ENCODE measurements at regions of chr1 and their contacts with region 1.

Region 1: GRCh38 chr1:156129706-156130581 is 15.4 kb downstream of the LMNA start:
- DNase-seq: peak; percentile 60 to 87 (median 78)
- ATAC-seq: peak; percentile 29
- H3K4me3 ChIP-seq: no peak overlapping the region
- H3K4me3 Mint-ChIP-seq: no peak overlapping the region
- H3K27ac ChIP-seq: no peak overlapping the region
- H3K27ac Mint-ChIP-seq: peak overlapping the region; percentile 55
- H3K4me1 ChIP-seq: peaks cover 46% of the 10 kb centered on the region
- H3K4me1 Mint-ChIP-seq: peaks cover 37% of the 10 kb centered on the region
- H3K27me3 ChIP-seq: no peaks in the 10 kb centered on the region
- H3K27me3 Mint-ChIP-seq: peaks cover 2% of the 10 kb centered on the region
- CTCF ChIP-seq: peak; percentile 85

Region 2: GRCh38 chr1:155657463-155657862 is 472.5 kb before region 1 on chr1:
- CTCF ChIA-PET with region 1: no interaction called
- POLR2A ChIA-PET with region 1: no interaction called
- intact Hi-C with region 1: no loop called
- DNase-seq: no peak
- ATAC-seq: no peak
- H3K4me3 ChIP-seq: no peak overlapping the region
- H3K4me3 Mint-ChIP-seq: no peak overlapping the region
- H3K27ac ChIP-seq: no peak overlapping the region
- H3K27ac Mint-ChIP-seq: peak overlapping the region; percentile 35
- H3K4me1 ChIP-seq: no peaks in the 10 kb centered on the region
- H3K4me1 Mint-ChIP-seq: no peaks in the 10 kb centered on the region
- H3K27me3 ChIP-seq: no peaks in the 10 kb centered on the region
- H3K27me3 Mint-ChIP-seq: no peaks in the 10 kb centered on the region
- CTCF ChIP-seq: no peak

Region 3: GRCh38 chr1:156090822-156091188 is 39.1 kb before region 1 on chr1:
- CTCF ChIA-PET with region 1: interaction called, 1,057 read pairs
- POLR2A ChIA-PET with region 1: interaction called, 12 read pairs
- intact Hi-C with region 1: loop called (anchors 1 kb)
- DNase-seq: peak; percentile 79 to 95 (median 89)
- ATAC-seq: peak; percentile 98
- H3K4me3 ChIP-seq: no peak overlapping the region
- H3K4me3 Mint-ChIP-seq: no peak overlapping the region
- H3K27ac ChIP-seq: no peak overlapping the region
- H3K27ac Mint-ChIP-seq: no peak overlapping the region
- H3K4me1 ChIP-seq: peaks cover 10% of the 10 kb centered on the region
- H3K4me1 Mint-ChIP-seq: peaks cover 3% of the 10 kb centered on the region
- H3K27me3 ChIP-seq: peaks cover 0 to 3% of the 10 kb centered on the region in 2 experiments
- H3K27me3 Mint-ChIP-seq: peaks cover 18% of the 10 kb centered on the region
- CTCF ChIP-seq: peak; percentile 76

Region 4: DNA sequence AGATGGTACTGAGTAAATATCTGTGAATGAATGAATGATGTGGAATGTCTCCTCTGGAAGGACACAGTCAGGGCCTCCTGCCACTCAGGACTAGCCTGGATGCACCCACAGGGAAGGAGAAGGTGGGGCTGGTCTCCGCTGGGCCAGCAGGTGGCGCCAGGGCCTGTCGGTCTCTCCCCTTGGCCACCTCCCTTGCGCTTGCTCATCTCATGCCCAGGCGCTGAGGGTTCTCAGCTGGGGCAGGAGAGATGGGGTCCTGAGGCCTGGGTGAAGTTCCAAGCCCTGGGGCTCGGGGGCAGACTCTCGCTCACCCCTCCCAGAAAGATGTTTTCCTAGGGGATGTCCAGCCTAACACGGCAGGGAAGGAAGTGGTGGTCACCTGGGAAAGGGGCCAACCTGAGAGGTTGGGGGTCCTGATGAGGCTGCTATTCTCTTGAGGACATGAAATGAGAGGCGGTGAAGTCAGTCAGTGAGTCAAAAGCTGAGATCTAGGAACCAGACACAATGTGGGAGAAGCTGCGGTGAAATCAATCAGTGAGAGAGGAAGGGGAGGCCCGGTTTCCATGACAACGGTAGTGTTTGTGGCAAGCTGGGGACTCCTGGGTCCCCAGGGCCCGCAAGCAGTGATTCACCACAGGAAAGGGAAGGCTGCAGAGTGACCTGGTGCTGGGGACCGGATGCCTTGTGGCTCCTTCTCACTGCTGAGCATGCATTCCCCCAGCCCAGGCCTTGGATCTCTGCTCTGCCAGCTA is 33.1 kb before region 1 on chr1:
- CTCF ChIA-PET with region 1: interaction called, 1,057 read pairs
- POLR2A ChIA-PET with region 1: interaction called, 12 read pairs
- intact Hi-C with region 1: loop called (anchors 1 kb)
- DNase-seq: peak; percentile 72 to 97 (median 87)
- ATAC-seq: peak; percentile 82
- H3K4me3 ChIP-seq: peak overlapping the region in 1 of 2 experiments; percentile 7
- H3K4me3 Mint-ChIP-seq: peak overlapping the region; percentile 46
- H3K27ac ChIP-seq: peak overlapping the region; percentile 48 to 87
- H3K27ac Mint-ChIP-seq: peak overlapping the region; percentile 89
- H3K4me1 ChIP-seq: peaks cover 22% of the 10 kb centered on the region
- H3K4me1 Mint-ChIP-seq: peaks cover 26% of the 10 kb centered on the region
- H3K27me3 ChIP-seq: no peaks in the 10 kb centered on the region
- H3K27me3 Mint-ChIP-seq: peaks cover 2% of the 10 kb centered on the region
- CTCF ChIP-seq: peak; percentile 93

Region 5: DNA sequence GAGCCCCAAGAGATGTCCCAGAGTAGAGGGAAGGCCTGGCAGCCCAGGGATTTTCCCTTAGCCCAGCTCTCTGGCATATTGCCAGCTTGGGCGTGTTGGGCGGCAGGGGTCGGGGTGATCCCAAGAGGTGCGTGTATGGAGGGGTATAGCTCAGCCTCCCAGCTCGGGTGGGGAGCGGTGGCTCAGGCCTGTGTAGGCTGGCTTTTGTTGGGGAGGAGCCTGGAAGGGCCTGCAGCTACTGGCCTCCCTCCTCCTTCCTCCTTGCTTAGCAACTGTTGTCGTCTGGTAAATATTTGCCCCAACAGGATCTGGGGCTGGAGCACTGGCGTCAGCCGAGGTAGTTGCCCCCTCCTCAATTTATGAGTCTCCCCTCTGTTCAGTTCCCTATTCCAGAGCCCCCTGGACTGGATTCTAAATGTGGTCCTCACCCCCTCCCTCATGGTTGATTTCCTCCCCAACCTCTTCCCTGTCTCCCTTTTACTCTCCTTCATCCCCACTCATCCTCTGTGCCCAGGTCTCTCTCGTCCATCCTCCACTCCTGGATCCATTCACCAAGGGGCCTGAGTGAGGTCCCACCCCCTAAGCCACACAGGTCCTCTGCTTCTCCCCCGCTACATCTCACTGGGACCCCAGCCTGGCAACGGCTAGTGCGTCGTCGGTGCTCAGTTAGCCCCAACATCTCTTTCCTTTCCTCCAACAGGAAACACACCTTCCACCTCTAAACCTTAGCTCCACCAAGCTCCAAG is 25.7 kb before region 1 on chr1:
- CTCF ChIA-PET with region 1: interaction called, 1,057 read pairs
- POLR2A ChIA-PET with region 1: interaction called, 6 read pairs
- intact Hi-C with region 1: loop called (anchors 1 kb)
- DNase-seq: peak in 5 of 9 experiments; percentile 50 to 82 (median 61)
- ATAC-seq: no peak
- H3K4me3 ChIP-seq: no peak overlapping the region
- H3K4me3 Mint-ChIP-seq: peak overlapping the region; percentile 29
- H3K27ac ChIP-seq: no peak overlapping the region
- H3K27ac Mint-ChIP-seq: peak overlapping the region; percentile 52
- H3K4me1 ChIP-seq: peaks cover 28% of the 10 kb centered on the region
- H3K4me1 Mint-ChIP-seq: peaks cover 33% of the 10 kb centered on the region
- H3K27me3 ChIP-seq: no peaks in the 10 kb centered on the region
- H3K27me3 Mint-ChIP-seq: no peaks in the 10 kb centered on the region
- CTCF ChIP-seq: no peak

Region 6: GRCh38 chr1:156114101-156114916 is 15.6 kb before region 1 on chr1 and contains the start of gene LMNA:
- CTCF ChIA-PET with region 1: interaction called, 1,057 read pairs
- POLR2A ChIA-PET with region 1: interaction called, 4 read pairs
- intact Hi-C with region 1: loop called (anchors 1 kb)
- DNase-seq: peak; percentile 40 to 90 (median 77)
- ATAC-seq: peak; percentile 80
- H3K4me3 ChIP-seq: peak within 1 kb of the TSS; percentile 60 to 83
- H3K4me3 Mint-ChIP-seq: peak within 1 kb of the TSS; percentile 93
- H3K27ac ChIP-seq: peak within 1 kb of the TSS; percentile 7 to 68
- H3K27ac Mint-ChIP-seq: peak within 1 kb of the TSS; percentile 88
- H3K4me1 ChIP-seq: peaks cover 22% of the 10 kb centered on the region
- H3K4me1 Mint-ChIP-seq: peaks cover 26% of the 10 kb centered on the region
- H3K27me3 ChIP-seq: peaks cover 16 to 18% of the 10 kb centered on the region in 2 experiments
- H3K27me3 Mint-ChIP-seq: peaks cover 26% of the 10 kb centered on the region
- CTCF ChIP-seq: no peak
- total RNA-seq, gene LMNA: 281 to 298 TPM

Region 7: DNA sequence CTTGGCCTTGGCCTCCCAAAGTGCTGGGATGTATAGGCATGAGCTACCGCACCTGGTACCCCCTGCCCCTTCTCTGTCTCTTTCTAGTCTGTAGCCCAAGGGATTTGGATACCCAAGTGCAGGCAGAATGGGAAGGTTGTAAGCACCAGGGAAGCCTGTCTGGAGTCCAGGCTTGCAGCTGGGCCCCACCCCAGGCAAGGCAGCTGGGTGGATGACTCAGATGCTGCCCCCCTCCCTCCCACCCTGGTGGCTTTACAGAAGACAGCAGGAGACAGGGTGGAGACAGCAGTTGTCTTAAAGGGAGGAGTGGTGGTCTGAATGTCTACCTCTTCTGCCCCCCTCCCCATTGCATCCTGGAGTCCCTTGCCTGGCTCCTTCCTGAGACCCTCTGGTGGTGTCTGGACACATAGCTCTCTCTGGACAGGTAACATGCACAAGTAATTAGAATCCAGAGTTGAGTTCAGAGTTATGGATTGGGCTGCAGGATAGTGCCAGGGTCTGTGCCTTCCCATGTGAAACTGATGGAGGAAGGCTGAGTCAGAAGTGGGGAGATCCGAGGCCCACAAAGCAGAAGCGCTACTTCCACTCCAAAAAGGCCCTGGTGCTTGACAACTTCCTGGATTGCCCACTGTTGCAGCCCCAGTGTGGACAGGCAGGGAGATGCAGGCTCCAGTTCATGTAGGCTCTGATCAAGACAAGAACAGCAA is 10.3 kb before region 1 on chr1:
- CTCF ChIA-PET with region 1: interaction called, 49 read pairs
- POLR2A ChIA-PET with region 1: no interaction called
- intact Hi-C with region 1: loop called (anchors 1 kb)
- DNase-seq: peak in 2 of 9 experiments; percentile 45 to 59
- ATAC-seq: peak; percentile 27
- H3K4me3 ChIP-seq: no peak overlapping the region
- H3K4me3 Mint-ChIP-seq: no peak overlapping the region
- H3K27ac ChIP-seq: no peak overlapping the region
- H3K27ac Mint-ChIP-seq: no peak overlapping the region
- H3K4me1 ChIP-seq: peaks cover 20% of the 10 kb centered on the region
- H3K4me1 Mint-ChIP-seq: peaks cover 30% of the 10 kb centered on the region
- H3K27me3 ChIP-seq: peaks cover 11 to 13% of the 10 kb centered on the region in 2 experiments
- H3K27me3 Mint-ChIP-seq: peaks cover 16% of the 10 kb centered on the region
- CTCF ChIP-seq: no peak

Region 8: GRCh38 chr1:156146020-156146768 is 16.2 kb after region 1 on chr1:
- CTCF ChIA-PET with region 1: interaction called, 102 read pairs
- POLR2A ChIA-PET with region 1: interaction called, 3 read pairs
- intact Hi-C with region 1: no loop called
- DNase-seq: peak in 5 of 9 experiments; percentile 37 to 83 (median 44)
- ATAC-seq: peak; percentile 84
- H3K4me3 ChIP-seq: no peak overlapping the region
- H3K4me3 Mint-ChIP-seq: peak overlapping the region; percentile 60
- H3K27ac ChIP-seq: no peak overlapping the region
- H3K27ac Mint-ChIP-seq: peak overlapping the region; percentile 32
- H3K4me1 ChIP-seq: peaks cover 19% of the 10 kb centered on the region
- H3K4me1 Mint-ChIP-seq: peaks cover 20% of the 10 kb centered on the region
- H3K27me3 ChIP-seq: no peaks in the 10 kb centered on the region
- H3K27me3 Mint-ChIP-seq: no peaks in the 10 kb centered on the region
- CTCF ChIP-seq: peak; percentile 72

Measured in CD8-positive, alpha-beta T cell (primary cell).